BJ (cell line): ENCODE measurements at regions of chr1 and their contacts with region 1.

Region 1: GRCh38 chr1:109263597-109264398 is 14.5 kb downstream of the CELSR2 start:
- DNase-seq: no peak
- H3K4me3 ChIP-seq: no peak overlapping the region
- H3K27me3 ChIP-seq: no peaks in the 10 kb centered on the region
- CTCF ChIP-seq: peak; percentile 99

Region 2: DNA sequence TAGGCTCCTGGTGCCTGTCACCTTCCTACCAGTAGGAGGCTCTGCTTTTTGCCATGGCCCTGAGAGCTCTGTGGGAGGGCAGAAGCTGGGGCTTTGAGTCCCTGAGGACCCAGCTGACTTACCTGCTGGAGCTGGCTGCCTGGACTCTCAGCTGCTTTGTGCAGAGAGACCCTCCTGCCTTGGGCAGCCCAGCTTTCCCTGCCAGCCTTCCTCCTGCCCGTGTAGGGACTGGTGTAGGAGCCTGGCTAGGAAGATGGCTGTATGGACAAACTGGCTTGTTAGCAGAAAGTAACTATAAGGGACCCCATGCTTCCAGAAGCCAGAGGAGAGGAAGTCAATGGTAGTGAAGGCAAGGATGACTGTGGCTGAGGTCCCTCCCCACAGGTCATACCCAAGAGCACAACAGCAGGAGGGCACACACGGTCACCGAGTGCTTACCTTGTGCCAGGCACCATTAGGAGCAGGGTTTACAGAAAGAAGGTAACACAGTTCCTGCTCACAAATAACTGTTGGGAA is 24.2 kb before region 1 on chr1:
- CTCF ChIA-PET with region 1: interaction called, 13 read pairs
- POLR2A ChIA-PET with region 1: no interaction called
- DNase-seq: no peak
- H3K4me3 ChIP-seq: no peak overlapping the region
- H3K27me3 ChIP-seq: no peaks in the 10 kb centered on the region
- CTCF ChIP-seq: peak; percentile 69

Region 3: GRCh38 chr1:109248797-109249642 is 14.8 kb before region 1 on chr1 and contains the start of gene CELSR2:
- CTCF ChIA-PET with region 1: interaction called, 10 read pairs
- POLR2A ChIA-PET with region 1: no interaction called
- DNase-seq: no peak
- H3K4me3 ChIP-seq: peak within 1 kb of the TSS; percentile 42
- H3K27me3 ChIP-seq: no peaks in the 10 kb centered on the region
- CTCF ChIP-seq: no peak
- polyA plus RNA-seq, gene CELSR2: 0.82 and 0.98 TPM in 2 replicates

Region 4: DNA sequence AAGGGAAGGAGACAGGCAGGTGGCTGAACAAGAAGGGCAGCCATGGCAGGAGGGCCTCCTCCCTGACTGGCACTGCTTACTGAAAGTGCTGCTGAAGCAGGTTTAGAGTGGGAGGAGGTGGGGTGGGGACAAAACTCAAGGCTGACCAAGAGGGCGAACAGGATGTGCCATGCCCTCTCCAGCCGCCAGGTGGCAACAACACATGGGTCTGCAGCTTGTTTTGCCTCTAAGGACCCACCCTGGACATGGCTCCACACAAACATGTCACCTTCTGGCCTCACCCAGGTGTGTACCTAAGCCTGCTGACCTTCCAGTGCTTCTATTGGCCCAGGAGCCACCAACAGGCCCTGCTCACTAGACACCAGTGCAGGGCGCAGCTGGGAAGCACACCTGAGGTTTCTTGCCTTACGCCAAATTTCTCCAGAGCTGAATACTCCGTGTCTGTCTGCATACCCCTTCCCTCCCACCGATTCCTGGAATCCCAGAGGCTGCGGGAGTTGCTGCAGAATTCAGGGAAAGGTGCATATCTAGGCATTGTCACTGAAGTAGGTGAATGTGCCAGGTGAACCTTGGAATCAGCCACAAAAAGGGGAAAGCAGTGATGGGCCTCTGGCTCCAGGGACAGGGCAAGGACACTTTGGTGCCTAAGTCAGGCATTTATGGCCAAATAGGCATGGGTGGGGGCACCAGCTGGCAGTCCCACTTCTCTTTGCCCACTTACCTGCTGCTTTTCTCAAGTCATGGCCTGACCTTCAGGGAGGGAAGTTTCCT is 13.8 kb after region 1 on chr1:
- CTCF ChIA-PET with region 1: interaction called, 31 read pairs
- POLR2A ChIA-PET with region 1: no interaction called
- DNase-seq: no peak
- H3K4me3 ChIP-seq: no peak overlapping the region
- H3K27me3 ChIP-seq: no peaks in the 10 kb centered on the region
- CTCF ChIP-seq: peak; percentile 93

Region 5: GRCh38 chr1:109454497-109455133 is 190.8 kb after region 1 on chr1:
- CTCF ChIA-PET with region 1: no interaction called
- POLR2A ChIA-PET with region 1: no interaction called
- DNase-seq: no peak
- H3K4me3 ChIP-seq: no peak overlapping the region
- H3K27me3 ChIP-seq: no peaks in the 10 kb centered on the region
- CTCF ChIP-seq: no peak